MCF 10A (cell line): ENCODE measurements at regions of chr18 and their contacts with region 1.

Region 1: DNA sequence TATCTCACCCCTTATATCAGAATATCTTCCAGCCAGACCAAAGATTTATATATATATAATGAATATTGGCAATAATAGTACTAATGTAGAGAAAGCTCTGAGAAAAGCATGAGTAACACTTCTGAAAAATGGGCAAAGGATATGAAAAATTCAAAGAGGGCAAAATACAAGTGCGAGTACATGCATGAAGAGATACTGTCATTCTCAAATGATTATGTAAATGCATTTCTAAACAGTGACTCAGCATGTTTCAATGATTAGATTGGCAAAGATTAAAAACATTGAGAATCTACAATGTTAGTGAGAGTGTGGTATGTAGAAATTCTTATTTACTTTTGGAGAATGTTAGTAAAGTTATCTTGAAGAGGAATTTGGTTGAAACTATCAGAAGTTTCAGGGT is 118.3 kb upstream of the NEDD4L start:
- DNase-seq: peak; percentile 57
- H3K4me3 Mint-ChIP-seq: no peak overlapping the region
- H3K27ac Mint-ChIP-seq: peak overlapping the region; percentile 76
- H3K4me1 Mint-ChIP-seq: peaks cover 22% of the 10 kb centered on the region
- H3K27me3 Mint-ChIP-seq: no peaks in the 10 kb centered on the region
- CTCF ChIP-seq: no peak

Region 2: DNA sequence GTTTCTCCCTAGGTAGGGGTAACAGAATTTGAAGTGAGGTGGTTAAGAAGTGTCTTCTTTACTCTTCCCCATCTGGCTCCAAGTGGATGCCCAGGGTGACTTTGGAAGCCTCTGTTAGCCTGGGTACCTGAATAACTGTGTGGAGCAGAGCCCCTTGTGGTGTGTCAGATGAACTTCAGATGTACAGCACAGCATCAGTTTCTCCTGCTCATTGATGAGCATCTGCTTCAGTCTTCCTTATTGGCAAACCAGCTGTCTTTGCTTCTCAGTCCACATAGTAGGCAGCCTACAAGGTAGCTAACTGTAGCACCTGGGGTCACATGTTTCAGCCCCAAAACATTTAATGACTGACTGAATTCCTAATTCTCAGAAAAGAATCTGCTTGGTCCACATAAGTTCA is 66.4 kb before region 1 on chr18:
- CTCF ChIA-PET with region 1: no interaction called
- POLR2A ChIA-PET with region 1: no interaction called
- intact Hi-C with region 1: no loop called
- DNase-seq: peak; percentile 56
- H3K4me3 Mint-ChIP-seq: no peak overlapping the region
- H3K27ac Mint-ChIP-seq: no peak overlapping the region
- H3K4me1 Mint-ChIP-seq: no peaks in the 10 kb centered on the region
- H3K27me3 Mint-ChIP-seq: no peaks in the 10 kb centered on the region
- CTCF ChIP-seq: peak; percentile 41

Region 3: DNA sequence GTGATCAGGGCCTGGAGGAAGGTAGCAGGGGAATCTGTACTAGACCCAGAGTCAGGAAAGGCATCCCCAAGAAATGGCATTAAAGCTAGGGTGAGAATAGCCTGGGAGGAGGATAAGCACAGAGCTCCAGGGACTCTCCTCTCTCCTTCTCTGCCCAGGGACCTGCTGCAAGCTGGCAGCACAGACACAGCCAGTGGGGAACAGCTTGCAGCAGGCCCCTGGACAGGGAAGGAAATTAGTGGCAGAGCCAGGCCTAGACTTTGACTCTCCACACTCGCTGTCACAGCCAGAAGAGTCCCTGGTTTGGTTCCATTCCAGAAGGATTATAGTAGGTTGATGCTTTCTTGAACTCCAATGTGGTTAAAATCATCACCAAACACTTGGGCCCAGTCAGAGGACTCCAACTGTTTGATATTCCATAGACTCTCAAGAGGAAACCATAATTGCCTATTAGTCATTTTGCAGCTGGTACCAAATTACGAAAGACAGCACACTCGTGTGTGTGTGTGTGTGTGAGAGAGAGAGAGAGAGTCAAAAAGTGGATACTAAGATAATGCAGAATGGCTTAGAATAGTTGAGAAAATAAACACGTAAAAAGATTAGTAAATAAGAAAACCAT is 27.1 kb before region 1 on chr18:
- CTCF ChIA-PET with region 1: no interaction called
- POLR2A ChIA-PET with region 1: interaction called, 20 read pairs
- intact Hi-C with region 1: no loop called
- DNase-seq: peak; percentile 73
- H3K4me3 Mint-ChIP-seq: no peak overlapping the region
- H3K27ac Mint-ChIP-seq: no peak overlapping the region
- H3K4me1 Mint-ChIP-seq: peaks cover 27% of the 10 kb centered on the region
- H3K27me3 Mint-ChIP-seq: no peaks in the 10 kb centered on the region
- CTCF ChIP-seq: no peak

Region 4: DNA sequence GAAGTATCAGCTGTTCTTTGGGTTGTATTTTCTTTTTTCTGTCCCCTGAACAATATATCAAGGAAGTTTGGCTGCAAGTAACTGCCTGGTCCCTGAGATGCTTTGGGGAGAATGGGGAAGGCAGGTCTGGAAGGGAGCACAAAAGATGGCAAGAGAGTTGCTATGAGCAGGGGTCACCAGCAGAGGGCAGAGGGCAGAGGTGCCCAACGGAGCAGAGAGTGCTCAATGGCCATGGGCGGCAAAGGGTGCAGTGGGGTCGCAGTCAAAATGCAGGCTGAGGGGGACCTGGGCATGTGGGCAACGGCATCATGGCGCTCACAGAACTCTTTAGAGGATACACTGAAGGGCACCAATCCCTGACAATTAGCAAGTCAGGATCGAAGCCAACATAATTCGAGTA is 14.9 kb before region 1 on chr18:
- CTCF ChIA-PET with region 1: interaction called, 13 read pairs
- POLR2A ChIA-PET with region 1: interaction called, 13 read pairs
- intact Hi-C with region 1: no loop called
- DNase-seq: no peak
- H3K4me3 Mint-ChIP-seq: no peak overlapping the region
- H3K27ac Mint-ChIP-seq: peak overlapping the region; percentile 97
- H3K4me1 Mint-ChIP-seq: peaks cover 39% of the 10 kb centered on the region
- H3K27me3 Mint-ChIP-seq: no peaks in the 10 kb centered on the region
- CTCF ChIP-seq: peak; percentile 39

Region 5: DNA sequence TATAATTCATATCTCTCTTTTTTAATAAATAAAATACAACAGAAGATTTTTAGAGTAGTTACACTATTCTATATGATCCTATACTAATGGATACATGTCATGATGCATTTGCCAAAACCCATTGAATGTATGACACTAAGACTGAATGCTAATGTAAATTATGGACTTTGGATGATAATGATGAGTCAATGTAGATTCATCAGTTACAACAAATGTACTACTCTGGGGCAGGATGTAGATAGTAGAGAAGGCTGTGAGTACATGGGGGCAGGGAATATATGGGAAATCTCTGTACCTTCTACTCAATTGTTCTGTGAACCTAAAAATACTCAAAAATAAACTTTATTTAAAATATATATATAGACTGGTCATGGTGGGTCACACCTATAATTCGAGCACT is 72.8 kb after region 1 on chr18:
- CTCF ChIA-PET with region 1: no interaction called
- POLR2A ChIA-PET with region 1: no interaction called
- intact Hi-C with region 1: no loop called
- DNase-seq: peak; percentile 14
- H3K4me3 Mint-ChIP-seq: no peak overlapping the region
- H3K27ac Mint-ChIP-seq: no peak overlapping the region
- H3K4me1 Mint-ChIP-seq: no peaks in the 10 kb centered on the region
- H3K27me3 Mint-ChIP-seq: no peaks in the 10 kb centered on the region
- CTCF ChIP-seq: no peak